ENCODE measurements at regions of chr7 and their contacts with region 1.

Region 1: GRCh38 chr7:24318326-24318725 is 34.3 kb downstream of the NPY start:
- DNase-seq: peak; percentile 41
- ATAC-seq: peak; percentile 95
- H3K4me3 Mint-ChIP-seq: no peak overlapping the region
- H3K27ac Mint-ChIP-seq: no peak overlapping the region
- H3K4me1 Mint-ChIP-seq: peaks cover 49% of the 10 kb centered on the region
- H3K27me3 Mint-ChIP-seq: no peaks in the 10 kb centered on the region
- CTCF ChIP-seq: 0 out of 2 replicates have a peak, but pooled peaks have one; percentile 31

Region 2: DNA sequence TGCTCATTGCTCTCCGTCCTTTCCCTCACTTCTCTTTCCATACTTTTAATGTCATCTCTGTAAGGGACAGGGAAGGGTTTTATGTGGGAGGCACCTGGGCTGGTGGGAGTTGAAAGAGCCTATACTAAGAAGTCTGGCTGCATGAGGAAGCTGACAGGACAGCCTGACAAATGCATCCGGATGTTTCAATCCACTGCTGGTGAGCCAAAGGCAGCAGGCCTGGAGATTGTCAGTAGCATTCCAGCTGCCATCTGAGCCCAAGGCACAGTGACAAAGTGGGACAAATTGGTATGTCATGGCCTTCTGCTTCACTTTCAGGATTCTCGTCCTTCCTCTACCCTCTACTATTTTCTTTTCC is 389.9 kb before region 1 on chr7:
- CTCF ChIA-PET with region 1: no interaction called
- POLR2A ChIA-PET with region 1: no interaction called
- DNase-seq: no peak
- ATAC-seq: no peak
- H3K4me3 Mint-ChIP-seq: no peak overlapping the region
- H3K27ac Mint-ChIP-seq: no peak overlapping the region
- H3K4me1 Mint-ChIP-seq: peaks cover 22% of the 10 kb centered on the region
- H3K27me3 Mint-ChIP-seq: no peaks in the 10 kb centered on the region
- CTCF ChIP-seq: no peak

Region 3: DNA sequence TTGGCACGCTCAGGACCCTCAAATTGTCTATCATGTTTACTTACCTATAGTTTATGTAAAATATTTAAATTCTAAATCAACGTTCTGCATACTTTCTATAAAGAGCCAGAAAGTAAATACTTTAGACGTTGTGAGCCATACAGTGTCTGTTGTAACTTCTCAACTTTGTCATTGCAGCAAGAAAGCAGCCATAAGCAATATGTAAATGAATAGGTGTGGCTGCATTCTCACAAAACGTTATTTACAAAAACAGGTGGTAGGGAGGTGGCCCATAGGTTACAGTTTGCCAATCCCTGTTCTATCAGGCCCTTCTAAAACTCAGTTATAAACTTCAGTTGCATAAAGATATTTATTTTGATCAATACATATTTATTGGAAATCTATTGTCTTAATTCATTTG is 46.4 kb before region 1 on chr7:
- CTCF ChIA-PET with region 1: no interaction called
- POLR2A ChIA-PET with region 1: no interaction called
- DNase-seq: no peak
- ATAC-seq: no peak
- H3K4me3 Mint-ChIP-seq: no peak overlapping the region
- H3K27ac Mint-ChIP-seq: no peak overlapping the region
- H3K4me1 Mint-ChIP-seq: no peaks in the 10 kb centered on the region
- H3K27me3 Mint-ChIP-seq: peaks cover 20% of the 10 kb centered on the region
- CTCF ChIP-seq: no peak

Region 4: GRCh38 chr7:24336461-24336860 is 18.1 kb after region 1 on chr7:
- CTCF ChIA-PET with region 1: interaction called, 20 read pairs
- POLR2A ChIA-PET with region 1: no interaction called
- DNase-seq: no peak
- ATAC-seq: no peak
- H3K4me3 Mint-ChIP-seq: peak overlapping the region; percentile 56
- H3K27ac Mint-ChIP-seq: no peak overlapping the region
- H3K4me1 Mint-ChIP-seq: peaks cover 35% of the 10 kb centered on the region
- H3K27me3 Mint-ChIP-seq: peaks cover 54% of the 10 kb centered on the region
- CTCF ChIP-seq: no peak

Region 5: GRCh38 chr7:24381894-24382505 is 63.7 kb after region 1 on chr7:
- CTCF ChIA-PET with region 1: interaction called, 38 read pairs
- POLR2A ChIA-PET with region 1: no interaction called
- DNase-seq: no peak
- ATAC-seq: peak; percentile 68
- H3K4me3 Mint-ChIP-seq: no peak overlapping the region
- H3K27ac Mint-ChIP-seq: peak overlapping the region; percentile 89
- H3K4me1 Mint-ChIP-seq: peaks cover 63% of the 10 kb centered on the region
- H3K27me3 Mint-ChIP-seq: no peaks in the 10 kb centered on the region
- CTCF ChIP-seq: 0 out of 2 replicates have a peak, but pooled peaks have one; percentile 20

Region 6: DNA sequence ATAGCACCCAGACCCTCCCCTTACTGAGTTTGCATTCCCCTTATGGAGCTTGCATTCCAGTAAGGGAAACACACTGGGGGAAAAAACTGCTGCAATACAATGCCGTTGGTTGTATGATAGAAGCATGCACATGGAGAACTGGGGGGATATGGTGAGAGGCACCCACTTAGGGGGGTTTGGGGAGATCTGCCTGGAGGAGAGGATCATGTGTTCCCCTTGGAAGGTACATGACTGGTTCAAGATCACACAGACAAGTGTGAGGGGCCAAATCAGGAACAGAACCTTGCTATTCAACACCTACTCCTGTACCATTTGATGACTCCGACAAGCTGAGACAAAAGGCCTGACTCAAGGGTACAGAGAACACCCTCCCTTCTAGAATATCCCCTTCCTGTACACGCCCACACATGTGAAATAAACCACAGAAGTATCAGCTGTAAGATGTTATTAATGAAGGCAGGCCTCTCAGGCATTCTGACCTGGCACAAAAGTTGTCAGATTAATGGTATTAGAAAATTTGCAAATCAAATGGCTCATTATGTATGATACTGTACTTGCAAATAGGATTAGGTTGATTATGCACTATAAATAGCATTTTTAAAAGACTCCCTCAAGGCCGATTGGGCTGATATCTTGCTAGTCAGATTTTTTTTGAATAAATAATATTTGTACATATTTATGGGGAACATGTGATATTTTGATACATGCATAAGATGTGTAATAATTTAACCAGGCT is 87.9 kb after region 1 on chr7:
- CTCF ChIA-PET with region 1: interaction called, 43 read pairs
- POLR2A ChIA-PET with region 1: interaction called, 4 read pairs
- DNase-seq: no peak
- ATAC-seq: peak; percentile 6
- H3K4me3 Mint-ChIP-seq: peak overlapping the region; percentile 13
- H3K27ac Mint-ChIP-seq: peak overlapping the region; percentile 94
- H3K4me1 Mint-ChIP-seq: peaks cover 72% of the 10 kb centered on the region
- H3K27me3 Mint-ChIP-seq: peaks cover 5% of the 10 kb centered on the region; the same call in 1 of the 2 replicates
- CTCF ChIP-seq: no peak

Region 7: DNA sequence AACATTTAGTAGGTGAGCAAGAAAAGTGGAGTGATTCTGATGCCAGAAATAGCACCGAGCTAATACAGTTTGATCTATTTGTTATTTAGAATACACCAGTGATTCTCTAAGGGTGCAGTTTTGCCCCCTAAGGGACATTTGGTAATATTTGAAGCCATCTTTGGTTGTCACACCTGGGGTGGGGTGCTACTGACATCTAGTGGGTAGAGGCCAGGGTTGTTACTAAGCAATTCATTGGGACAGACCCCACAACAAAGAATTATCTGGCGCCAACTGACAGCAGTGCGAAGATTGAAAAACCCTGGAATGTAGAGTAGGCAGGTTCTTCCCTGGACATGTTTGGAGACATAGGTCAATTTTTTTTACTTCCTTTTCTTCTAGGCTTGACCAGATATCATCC is 269.5 kb after region 1 on chr7:
- CTCF ChIA-PET with region 1: interaction called, 11 read pairs
- POLR2A ChIA-PET with region 1: no interaction called
- DNase-seq: peak; percentile 63
- ATAC-seq: peak; percentile 95
- H3K4me3 Mint-ChIP-seq: no peak overlapping the region
- H3K27ac Mint-ChIP-seq: no peak overlapping the region
- H3K4me1 Mint-ChIP-seq: peaks cover 41% of the 10 kb centered on the region
- H3K27me3 Mint-ChIP-seq: no peaks in the 10 kb centered on the region
- CTCF ChIP-seq: peak; percentile 40; the same call in 1 of the 2 replicates